ENCODE measurements at regions of chr14 and their contacts with region 1.

Region 1: DNA sequence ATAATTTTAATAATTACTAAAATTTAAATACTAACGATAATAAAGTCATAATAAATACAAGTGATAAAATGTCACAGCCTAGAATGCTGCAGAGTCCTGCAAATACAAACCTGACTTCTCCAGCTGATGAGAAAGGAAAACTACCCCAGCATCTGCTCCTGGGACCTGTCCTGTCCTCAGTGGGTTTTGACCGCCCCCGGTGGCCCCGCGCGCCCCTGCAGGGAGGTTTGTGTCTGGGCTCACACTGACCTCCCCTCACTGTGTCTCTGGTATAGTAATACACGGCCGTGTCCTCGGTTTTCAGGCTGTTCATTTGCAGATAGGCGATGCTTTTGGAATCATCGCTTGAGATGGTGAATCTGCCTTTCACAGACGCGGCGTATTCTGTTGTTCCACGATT is 1139.4 kb downstream of the TMEM121 start:
- DNase-seq: no peak
- ATAC-seq: no peak
- H3K4me3 Mint-ChIP-seq: no peak overlapping the region
- H3K27ac Mint-ChIP-seq: no peak overlapping the region
- H3K4me1 Mint-ChIP-seq: peaks cover 7% of the 10 kb centered on the region
- H3K27me3 Mint-ChIP-seq: peaks cover 56% of the 10 kb centered on the region

Region 2: DNA sequence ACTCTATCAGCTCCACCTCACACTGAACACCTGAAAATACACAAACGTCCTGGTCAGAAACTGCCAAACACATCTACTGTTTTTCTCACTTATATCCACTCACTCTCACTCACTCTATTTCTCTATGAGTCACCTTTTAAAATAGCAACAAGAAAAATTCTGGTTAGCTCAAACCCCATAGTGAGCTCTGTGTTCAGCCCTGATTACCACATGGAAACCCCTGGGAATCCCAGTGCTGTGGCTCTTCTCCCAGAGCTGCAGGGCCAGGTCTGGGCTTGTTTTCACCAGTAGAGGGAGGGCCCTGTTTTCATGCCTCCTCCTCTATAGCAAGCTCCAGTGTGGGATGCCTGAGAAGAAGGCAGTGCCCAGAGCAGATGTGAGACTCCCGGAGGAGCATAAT is 13.3 kb before region 1 on chr14:
- CTCF ChIA-PET with region 1: interaction called, 16 read pairs
- DNase-seq: no peak
- ATAC-seq: no peak
- H3K4me3 Mint-ChIP-seq: no peak overlapping the region
- H3K27ac Mint-ChIP-seq: no peak overlapping the region
- H3K4me1 Mint-ChIP-seq: peaks cover 2% of the 10 kb centered on the region
- H3K27me3 Mint-ChIP-seq: peaks cover 55% of the 10 kb centered on the region

Region 3: GRCh38 chr14:106681568-106681967 is 15.8 kb after region 1 on chr14:
- CTCF ChIA-PET with region 1: interaction called, 41 read pairs
- DNase-seq: no peak
- ATAC-seq: peak; percentile 78
- H3K4me3 Mint-ChIP-seq: no peak overlapping the region
- H3K27ac Mint-ChIP-seq: no peak overlapping the region
- H3K4me1 Mint-ChIP-seq: no peaks in the 10 kb centered on the region
- H3K27me3 Mint-ChIP-seq: peaks cover 69% of the 10 kb centered on the region

Region 4: DNA sequence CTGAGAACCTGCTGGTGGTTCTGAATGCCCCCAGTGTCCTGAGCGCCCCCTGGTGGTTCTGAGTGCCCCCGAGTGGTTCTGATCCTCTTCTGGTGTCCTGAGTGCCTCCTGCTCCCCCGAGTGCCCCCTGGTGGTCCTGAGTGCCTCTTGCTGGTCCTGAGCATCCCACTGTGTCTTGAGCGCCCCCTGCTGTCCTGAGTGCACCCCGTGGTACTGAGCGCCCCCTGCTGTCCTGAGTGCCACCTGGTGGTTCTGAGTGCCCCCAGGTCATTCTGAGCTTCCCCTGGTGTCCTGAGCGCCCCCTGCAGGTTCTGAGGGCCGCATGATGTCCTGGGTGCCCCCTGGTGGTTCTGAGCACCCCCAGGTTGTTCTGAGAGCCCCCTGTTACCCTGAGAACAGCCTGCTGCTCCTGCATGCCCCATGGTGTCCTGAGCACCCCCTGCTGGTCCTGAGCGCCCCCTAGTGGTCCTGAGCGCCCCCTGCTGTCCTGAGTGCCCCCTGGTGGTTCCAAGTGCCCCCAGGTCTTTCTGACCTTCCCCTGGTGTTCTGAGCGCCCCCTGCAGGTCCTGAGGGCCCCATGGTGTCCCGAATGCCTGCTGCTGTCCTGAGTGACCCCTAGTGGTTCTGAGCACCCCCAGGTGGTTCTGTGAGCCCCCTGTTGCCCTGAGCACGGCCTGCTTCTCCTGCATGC is 25.9 kb after region 1 on chr14:
- CTCF ChIA-PET with region 1: interaction called, 23 read pairs
- DNase-seq: peak; percentile 88
- ATAC-seq: peak; percentile 61
- H3K4me3 Mint-ChIP-seq: no peak overlapping the region
- H3K27ac Mint-ChIP-seq: no peak overlapping the region
- H3K4me1 Mint-ChIP-seq: peaks cover 18% of the 10 kb centered on the region
- H3K27me3 Mint-ChIP-seq: peaks cover 17% of the 10 kb centered on the region

Measured in activated CD8-positive, alpha-beta memory T cell treated with anti-CD3 and anti-CD28 coated beads, Interleukin-2, amount 10 ng/mL, durations not matched to agents 7 days and 5 days (primary cell).